ENCODE measurements at regions of chr12 and their contacts with region 1.

Region 1: GRCh38 chr12:93317227-93317626 is 60.5 kb upstream of the NUDT4 start:
- DNase-seq: peak; percentile 16
- H3K4me3 ChIP-seq: no peak overlapping the region
- H3K27ac ChIP-seq: no peak overlapping the region
- H3K4me1 ChIP-seq: peaks cover 3% of the 10 kb centered on the region
- H3K27me3 ChIP-seq: no peaks in the 10 kb centered on the region
- CTCF ChIP-seq: no peak

Region 2: GRCh38 chr12:93361151-93361919 is 44.1 kb after region 1 on chr12:
- CTCF ChIA-PET with region 1: no interaction called
- dilution Hi-C with region 1: loop called (anchors 10 kb)
- in situ Hi-C with region 1: no loop called
- intact Hi-C with region 1: no loop called
- DNase-seq: peak; percentile 56
- H3K4me3 ChIP-seq: no peak overlapping the region
- H3K27ac ChIP-seq: no peak overlapping the region
- H3K4me1 ChIP-seq: no peaks in the 10 kb centered on the region
- H3K27me3 ChIP-seq: no peaks in the 10 kb centered on the region
- CTCF ChIP-seq: no peak

Region 3: GRCh38 chr12:93427779-93428563 is 110.7 kb after region 1 on chr12:
- CTCF ChIA-PET with region 1: no interaction called
- dilution Hi-C with region 1: no loop called
- in situ Hi-C with region 1: no loop called
- intact Hi-C with region 1: no loop called
- DNase-seq: no peak
- H3K4me3 ChIP-seq: no peak overlapping the region
- H3K27ac ChIP-seq: no peak overlapping the region
- H3K4me1 ChIP-seq: peaks cover 14% of the 10 kb centered on the region
- H3K27me3 ChIP-seq: no peaks in the 10 kb centered on the region
- CTCF ChIP-seq: no peak

Measured in mammary epithelial cell (primary cell).